Panc1 (cell line): ENCODE measurements at regions of chr5 and their contacts with region 1.

Region 1: DNA sequence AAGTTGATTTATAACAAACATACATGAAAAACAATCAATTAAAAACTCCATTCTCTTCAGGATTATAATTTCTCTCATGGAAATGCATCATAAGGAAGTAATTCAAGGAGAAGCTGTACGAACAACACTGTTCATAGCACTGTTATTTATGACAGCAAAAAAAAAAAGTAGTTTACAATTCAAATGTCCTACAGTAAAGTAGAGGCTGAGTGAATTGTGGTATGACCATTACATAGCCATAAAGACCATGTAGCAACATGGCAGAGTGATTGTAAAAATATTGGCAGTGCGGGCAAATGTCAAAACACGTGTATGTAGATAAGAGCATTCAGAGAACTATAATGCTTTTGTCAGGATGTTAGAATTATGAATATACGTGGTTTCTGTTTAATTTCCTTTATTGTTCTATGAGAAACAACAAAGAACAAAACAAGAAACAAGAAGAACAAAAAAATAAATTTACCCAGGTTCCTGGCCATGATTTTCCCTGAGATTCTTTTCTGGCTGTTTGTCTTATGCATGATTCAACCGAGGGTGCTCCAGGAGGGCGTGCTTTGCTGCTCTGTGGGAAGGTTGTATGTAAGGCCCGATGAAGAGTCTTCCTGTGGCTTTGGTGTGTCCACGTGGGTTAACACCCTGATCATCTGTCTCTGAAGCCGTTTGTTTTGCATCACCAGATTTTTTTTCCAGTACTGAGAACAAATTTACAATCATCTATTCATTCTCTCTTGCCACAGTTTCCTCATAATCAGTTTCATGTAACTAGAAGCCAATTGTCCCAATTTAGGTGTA is 28.8 kb downstream of the GCNT4 start:
- DNase-seq: no peak
- ATAC-seq: no peak
- H3K4me3 ChIP-seq: no peak overlapping the region
- H3K27ac ChIP-seq: no peak overlapping the region
- H3K4me1 ChIP-seq: no peaks in the 10 kb centered on the region
- H3K27me3 ChIP-seq: peaks cover 5% of the 10 kb centered on the region; the same call in 1 of the 2 replicates
- CTCF ChIP-seq: no peak

Region 2: DNA sequence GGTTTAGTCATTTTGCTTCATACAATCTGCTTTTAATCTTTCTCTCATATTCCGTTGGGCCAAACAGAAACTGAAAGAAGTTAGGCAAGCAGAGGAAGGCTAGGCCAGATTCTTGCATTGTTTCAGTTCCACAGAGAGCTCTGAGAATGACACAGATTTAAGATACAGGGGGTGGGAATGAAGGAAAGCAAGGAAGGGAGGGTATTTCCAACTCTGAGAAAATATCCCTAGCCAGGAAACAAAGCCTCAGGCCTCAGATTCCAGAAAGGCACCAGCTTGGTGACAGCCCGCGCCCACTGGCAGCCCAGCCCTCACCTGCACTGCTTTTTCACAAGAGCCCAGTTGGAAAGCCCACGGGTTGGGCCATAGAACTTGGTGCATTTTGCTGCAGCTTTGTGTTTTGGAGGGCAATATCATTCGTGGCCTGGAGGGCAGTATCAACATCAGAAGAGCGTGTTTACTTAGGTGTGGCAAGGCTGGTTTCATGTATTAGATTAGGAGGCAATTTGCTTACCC is 446.6 kb before region 1 on chr5:
- CTCF ChIA-PET with region 1: no interaction called
- POLR2A ChIA-PET with region 1: no interaction called
- in situ Hi-C with region 1: no loop called
- intact Hi-C with region 1: no loop called
- DNase-seq: no peak
- ATAC-seq: peak; percentile 59; the same call in 1 of the 2 replicates
- H3K4me3 ChIP-seq: peak overlapping the region in 1 of 2 experiments; percentile 19; a peak in 1 of 4 replicates
- H3K27ac ChIP-seq: peak overlapping the region; percentile 65
- H3K4me1 ChIP-seq: peaks cover 10% of the 10 kb centered on the region
- H3K27me3 ChIP-seq: no peaks in the 10 kb centered on the region
- CTCF ChIP-seq: no peak

Region 3: GRCh38 chr5:75320341-75320740 is 296.8 kb after region 1 on chr5:
- CTCF ChIA-PET with region 1: no interaction called
- POLR2A ChIA-PET with region 1: no interaction called
- in situ Hi-C with region 1: no loop called
- intact Hi-C with region 1: no loop called
- DNase-seq: no peak
- ATAC-seq: no peak
- H3K4me3 ChIP-seq: no peak overlapping the region
- H3K27ac ChIP-seq: no peak overlapping the region
- H3K4me1 ChIP-seq: no peaks in the 10 kb centered on the region
- H3K27me3 ChIP-seq: no peaks in the 10 kb centered on the region
- CTCF ChIP-seq: no peak

Region 4: DNA sequence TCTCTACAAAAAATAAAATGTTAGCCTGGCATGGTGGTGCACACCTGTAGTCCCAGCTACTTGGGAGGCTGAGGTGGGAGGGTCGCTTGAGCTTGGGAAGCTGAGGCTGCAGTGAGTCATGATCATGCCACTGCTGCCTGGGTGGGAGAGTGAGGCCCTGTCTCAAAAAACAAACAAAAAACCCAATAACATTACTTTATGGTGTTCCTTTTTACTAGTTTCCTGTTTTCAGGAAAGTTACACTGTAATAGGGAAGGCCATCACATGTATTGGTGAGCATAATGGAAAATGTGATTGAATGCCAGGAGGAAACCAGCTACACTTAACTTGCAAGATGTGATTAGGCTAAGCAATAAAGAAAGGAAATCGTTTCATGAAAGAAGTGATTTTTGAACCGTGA is 1102.3 kb after region 1 on chr5:
- CTCF ChIA-PET with region 1: no interaction called
- POLR2A ChIA-PET with region 1: interaction called, 10 read pairs
- in situ Hi-C with region 1: no loop called
- intact Hi-C with region 1: no loop called
- DNase-seq: no peak
- ATAC-seq: no peak
- H3K4me3 ChIP-seq: no peak overlapping the region
- H3K27ac ChIP-seq: no peak overlapping the region
- H3K4me1 ChIP-seq: no peaks in the 10 kb centered on the region
- H3K27me3 ChIP-seq: peaks cover 18% of the 10 kb centered on the region
- CTCF ChIP-seq: no peak